AG04450 (cell line): ENCODE measurements at regions of chr2 and their contacts with region 1.

Region 1: GRCh38 chr2:148509288-148509902 is 135.2 kb upstream of the EPC2 start:
- DNase-seq: peak; percentile 55
- H3K4me3 ChIP-seq: 0 out of 2 replicates have a peak overlapping the region, but pooled peaks have one; percentile 11
- H3K27ac ChIP-seq: no peak overlapping the region
- H3K27me3 ChIP-seq: no peaks in the 10 kb centered on the region
- CTCF ChIP-seq: peak; percentile 98

Region 2: GRCh38 chr2:147937744-147938349 is 571.5 kb before region 1 on chr2:
- CTCF ChIA-PET with region 1: interaction called, 45 read pairs
- POLR2A ChIA-PET with region 1: no interaction called
- DNase-seq: no peak
- H3K4me3 ChIP-seq: no peak overlapping the region
- H3K27ac ChIP-seq: no peak overlapping the region
- H3K27me3 ChIP-seq: no peaks in the 10 kb centered on the region
- CTCF ChIP-seq: peak; percentile 91

Region 3: GRCh38 chr2:147989809-147990403 is 519.5 kb before region 1 on chr2:
- CTCF ChIA-PET with region 1: interaction called, 137 read pairs
- POLR2A ChIA-PET with region 1: interaction called, 5 read pairs
- DNase-seq: peak; percentile 27
- H3K4me3 ChIP-seq: no peak overlapping the region
- H3K27ac ChIP-seq: no peak overlapping the region
- H3K27me3 ChIP-seq: no peaks in the 10 kb centered on the region
- CTCF ChIP-seq: peak; percentile 77

Region 4: GRCh38 chr2:148020111-148021058 is 489.0 kb before region 1 on chr2 and contains the start of gene ORC4:
- CTCF ChIA-PET with region 1: interaction called, 17 read pairs
- POLR2A ChIA-PET with region 1: no interaction called
- DNase-seq: peak; percentile 99
- H3K4me3 ChIP-seq: peak within 1 kb of the TSS; percentile 96
- H3K27ac ChIP-seq: peak within 1 kb of the TSS; percentile 78
- H3K27me3 ChIP-seq: no peaks in the 10 kb centered on the region
- CTCF ChIP-seq: peak; percentile 53
- polyA plus RNA-seq, gene ORC4: 27.0 and 49.7 TPM in 2 replicates

Region 5: DNA sequence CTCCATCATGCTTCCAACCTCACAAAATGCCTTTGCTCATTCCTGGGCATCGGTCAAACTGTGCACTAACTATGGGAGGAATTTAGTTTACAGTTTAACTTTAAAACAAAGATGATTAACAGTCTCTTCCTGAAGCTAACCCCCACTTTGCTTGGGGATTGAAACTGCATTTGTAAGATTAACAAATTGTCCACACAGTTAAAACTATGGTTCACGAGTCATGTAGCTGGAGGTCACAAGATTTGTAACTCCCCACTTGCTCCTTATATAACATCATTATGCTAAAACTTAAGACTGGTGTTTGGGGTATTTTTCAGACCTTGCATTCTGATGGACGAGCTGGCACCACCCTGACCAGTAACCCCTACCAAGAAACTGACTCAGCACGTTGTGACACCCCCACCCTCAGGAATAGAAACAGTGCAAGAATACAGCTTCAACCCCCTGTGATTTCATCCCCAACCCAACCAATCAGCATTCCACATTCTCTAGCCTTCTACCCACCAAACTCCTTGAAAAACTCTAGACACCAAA is 236.2 kb before region 1 on chr2:
- CTCF ChIA-PET with region 1: no interaction called
- POLR2A ChIA-PET with region 1: no interaction called
- DNase-seq: peak; percentile 11
- H3K4me3 ChIP-seq: no peak overlapping the region
- H3K27ac ChIP-seq: peak overlapping the region; percentile 32
- H3K27me3 ChIP-seq: no peaks in the 10 kb centered on the region
- CTCF ChIP-seq: no peak

Region 6: DNA sequence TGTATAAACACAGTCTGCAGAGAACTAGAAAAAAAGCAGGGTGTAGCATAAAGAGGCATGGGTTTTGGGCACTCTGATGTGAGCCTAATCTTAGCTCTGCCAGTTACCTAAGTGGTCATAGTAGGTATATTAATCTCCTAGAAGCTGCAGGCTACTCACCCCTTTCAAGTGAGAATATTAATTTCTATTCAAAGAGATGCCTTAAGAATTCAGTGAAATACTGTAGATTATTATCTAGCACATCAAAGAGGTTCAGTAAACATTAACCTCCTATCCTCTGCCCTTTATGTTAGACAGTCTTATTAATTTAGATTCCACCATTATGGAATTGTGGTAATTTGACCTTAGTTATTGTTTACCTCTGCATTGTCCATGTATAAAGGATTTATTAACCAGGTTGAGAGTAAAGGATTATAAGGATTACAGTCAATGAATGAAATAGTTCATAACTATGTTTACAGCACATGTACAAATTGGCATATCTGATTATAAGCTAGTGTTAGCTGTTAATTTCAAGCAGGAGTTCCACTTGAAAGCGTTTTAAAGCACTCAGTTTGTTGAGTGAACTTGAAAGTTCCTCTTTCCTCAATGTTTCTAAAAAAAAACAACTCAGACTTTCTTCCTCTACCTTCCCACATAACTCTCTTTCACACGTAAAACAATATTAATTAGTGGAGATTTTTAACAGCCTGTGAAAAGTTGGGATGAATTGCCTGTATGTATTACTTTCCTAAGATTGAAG is 15.4 kb before region 1 on chr2:
- CTCF ChIA-PET with region 1: interaction called, 12 read pairs
- POLR2A ChIA-PET with region 1: no interaction called
- DNase-seq: no peak
- H3K4me3 ChIP-seq: no peak overlapping the region
- H3K27ac ChIP-seq: no peak overlapping the region
- H3K27me3 ChIP-seq: no peaks in the 10 kb centered on the region
- CTCF ChIP-seq: no peak

Region 7: DNA sequence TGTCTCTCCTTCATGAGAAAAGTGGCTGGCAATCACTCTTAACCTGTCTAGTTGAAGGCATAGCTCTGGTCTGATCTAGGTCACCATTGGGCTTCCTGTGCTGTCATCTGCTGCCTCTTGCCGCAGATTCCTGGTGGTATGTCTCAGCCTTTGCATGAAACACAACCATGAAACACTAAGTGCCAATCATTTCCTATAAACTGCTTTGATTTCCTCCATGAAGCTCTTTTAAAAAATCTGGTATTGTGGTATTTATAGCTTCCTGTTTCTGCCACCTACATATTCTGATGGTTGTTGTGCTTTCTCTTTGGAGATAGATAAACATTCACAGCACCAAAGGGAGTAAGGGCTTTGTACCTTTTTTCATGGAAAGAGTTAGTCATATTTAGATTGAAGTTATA is 15.1 kb after region 1 on chr2:
- CTCF ChIA-PET with region 1: interaction called, 25 read pairs
- POLR2A ChIA-PET with region 1: interaction called, 5 read pairs
- DNase-seq: no peak
- H3K4me3 ChIP-seq: no peak overlapping the region
- H3K27ac ChIP-seq: no peak overlapping the region
- H3K27me3 ChIP-seq: no peaks in the 10 kb centered on the region
- CTCF ChIP-seq: no peak